H1 (cell line): ENCODE measurements at regions of chr10 and their contacts with region 1.

Region 1: GRCh38 chr10:71547876-71548846 is 151.4 kb downstream of the CDH23 start:
- DNase-seq: peak in 1 of 2 experiments; percentile 75
- H3K4me3 ChIP-seq: no peak overlapping the region
- H3K27ac ChIP-seq: no peak overlapping the region
- H3K4me1 ChIP-seq: peaks cover 2 to 33% (median 17%) of the 10 kb centered on the region in 4 experiments
- H3K27me3 ChIP-seq: no peaks in the 10 kb centered on the region
- CTCF ChIP-seq: peak; percentile 57 to 71 (median 65)
- EP300 ChIP-seq: no peak
- POLR2A ChIP-seq: no peak
- RAD21 ChIP-seq: peak; percentile 26 to 51; a peak in 3 of 4 replicates

Region 2: GRCh38 chr10:71486484-71487114 is 61.6 kb before region 1 on chr10:
- CTCF ChIA-PET with region 1: interaction called, 27 read pairs
- POLR2A ChIA-PET with region 1: no interaction called
- DNase-seq: peak in 1 of 2 experiments; percentile 93
- H3K4me3 ChIP-seq: no peak overlapping the region
- H3K27ac ChIP-seq: no peak overlapping the region
- H3K4me1 ChIP-seq: peaks cover 0 to 6% (median 1%) of the 10 kb centered on the region in 4 experiments; a peak in 3 of 7 replicates
- H3K27me3 ChIP-seq: no peaks in the 10 kb centered on the region
- CTCF ChIP-seq: peak; percentile 92 to 99 (median 96)
- EP300 ChIP-seq: no peak
- POLR2A ChIP-seq: no peak
- RAD21 ChIP-seq: peak; percentile 92 to 94

Region 3: GRCh38 chr10:71501402-71501801 is 46.8 kb before region 1 on chr10:
- CTCF ChIA-PET with region 1: interaction called, 11 read pairs
- POLR2A ChIA-PET with region 1: no interaction called
- DNase-seq: no peak
- H3K4me3 ChIP-seq: no peak overlapping the region
- H3K27ac ChIP-seq: no peak overlapping the region
- H3K4me1 ChIP-seq: peaks cover 0 to 12% (median 6%) of the 10 kb centered on the region in 4 experiments; a peak in 4 of 7 replicates
- H3K27me3 ChIP-seq: peaks cover 0 to 23% (median 16%) of the 10 kb centered on the region in 4 experiments; a peak in 6 of 7 replicates
- CTCF ChIP-seq: peak in 2 of 3 experiments; percentile 18 to 29; a peak in 2 of 4 replicates
- EP300 ChIP-seq: no peak
- POLR2A ChIP-seq: no peak
- RAD21 ChIP-seq: peak; percentile 17 to 43; a peak in 3 of 4 replicates

Region 4: GRCh38 chr10:71512775-71513539 is 35.2 kb before region 1 on chr10:
- CTCF ChIA-PET with region 1: interaction called, 14 read pairs
- POLR2A ChIA-PET with region 1: no interaction called
- DNase-seq: no peak
- H3K4me3 ChIP-seq: no peak overlapping the region
- H3K27ac ChIP-seq: no peak overlapping the region
- H3K4me1 ChIP-seq: peaks cover 0 to 5% (median 0%) of the 10 kb centered on the region in 4 experiments; a peak in 1 of 7 replicates
- H3K27me3 ChIP-seq: no peaks in the 10 kb centered on the region
- CTCF ChIP-seq: no peak
- EP300 ChIP-seq: no peak
- POLR2A ChIP-seq: no peak
- RAD21 ChIP-seq: no peak

Region 5: DNA sequence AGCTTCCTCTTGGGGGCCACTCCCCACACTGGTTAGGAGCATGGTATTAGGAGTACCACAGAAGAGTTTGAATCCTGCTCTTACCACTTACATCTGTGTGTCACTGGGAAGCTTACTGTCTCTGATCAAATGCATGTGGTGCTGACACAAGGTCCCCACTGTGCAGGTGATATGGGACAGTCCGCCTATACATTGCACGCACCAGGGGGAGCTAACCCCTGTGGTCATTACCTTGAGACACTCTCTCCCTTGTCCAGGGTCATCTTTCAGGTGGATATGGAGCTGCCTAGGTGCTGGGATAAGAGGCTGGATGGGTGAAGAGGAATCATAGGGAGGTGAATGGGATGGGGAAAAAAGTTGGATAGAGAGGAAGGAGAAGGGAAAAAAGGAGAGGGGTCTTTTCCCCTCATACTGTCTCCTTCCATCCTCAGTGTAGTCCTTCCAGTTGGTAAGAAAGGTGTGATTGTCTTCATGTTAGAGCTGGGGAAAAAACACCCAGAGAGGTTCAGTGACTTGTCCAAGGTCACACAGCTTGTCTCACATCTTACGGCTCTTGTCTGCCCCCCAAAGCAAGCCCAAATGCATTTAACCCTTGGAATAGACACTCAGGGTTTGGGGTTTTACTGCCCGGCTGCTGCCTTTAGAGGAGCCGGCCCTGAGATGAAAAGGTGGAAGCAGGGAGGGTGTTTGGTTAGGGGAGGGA is 25.6 kb before region 1 on chr10:
- CTCF ChIA-PET with region 1: interaction called, 15 read pairs
- POLR2A ChIA-PET with region 1: no interaction called
- DNase-seq: no peak
- H3K4me3 ChIP-seq: no peak overlapping the region
- H3K27ac ChIP-seq: no peak overlapping the region
- H3K4me1 ChIP-seq: peaks cover 0 to 3% (median 0%) of the 10 kb centered on the region in 4 experiments; a peak in 3 of 7 replicates
- H3K27me3 ChIP-seq: no peaks in the 10 kb centered on the region; a peak in 2 of 7 replicates
- CTCF ChIP-seq: peak; percentile 24 to 41 (median 37); a peak in 3 of 4 replicates
- EP300 ChIP-seq: no peak
- POLR2A ChIP-seq: no peak
- RAD21 ChIP-seq: peak; percentile 24 to 39; a peak in 3 of 4 replicates

Region 6: DNA sequence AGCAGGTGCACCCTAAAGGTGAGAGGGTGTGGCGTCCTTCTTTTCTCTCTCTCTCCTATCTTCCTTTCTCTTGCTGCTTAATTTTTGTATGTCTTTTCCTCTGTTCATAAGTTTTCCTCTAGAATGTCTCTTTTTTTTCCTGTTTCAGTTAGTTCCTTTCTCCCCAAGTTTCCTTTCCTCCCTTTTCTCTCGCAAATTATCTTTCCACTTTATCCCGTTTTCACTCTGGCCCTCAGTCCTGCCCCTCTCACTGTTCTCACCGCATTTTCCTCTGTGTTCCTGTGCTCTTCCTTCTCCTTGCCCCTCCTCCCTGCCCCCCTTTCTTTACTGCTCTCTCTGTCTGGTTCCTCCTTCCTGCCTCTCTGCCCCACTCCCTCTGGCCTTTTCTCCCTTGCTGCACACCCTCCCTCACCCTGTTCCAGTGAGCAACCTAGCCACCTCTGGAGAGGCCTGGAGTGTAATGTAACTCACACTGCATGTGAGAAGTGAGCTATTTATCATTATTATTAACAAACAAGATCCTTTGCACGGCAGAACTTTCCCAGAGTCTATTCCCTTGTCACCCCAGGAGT is 12.9 kb after region 1 on chr10:
- CTCF ChIA-PET with region 1: interaction called, 168 read pairs
- POLR2A ChIA-PET with region 1: no interaction called
- DNase-seq: no peak
- H3K4me3 ChIP-seq: no peak overlapping the region
- H3K27ac ChIP-seq: no peak overlapping the region
- H3K4me1 ChIP-seq: peaks cover 2 to 14% (median 10%) of the 10 kb centered on the region in 4 experiments
- H3K27me3 ChIP-seq: 0 out of 7 replicates have a peak, but pooled peaks cover 0 to 2% (median 0%) of the 10 kb centered on the region in 4 experiments
- CTCF ChIP-seq: no peak
- EP300 ChIP-seq: no peak
- POLR2A ChIP-seq: no peak
- RAD21 ChIP-seq: no peak